ENCODE measurements at regions of chr4 and their contacts with region 1.

Region 1: DNA sequence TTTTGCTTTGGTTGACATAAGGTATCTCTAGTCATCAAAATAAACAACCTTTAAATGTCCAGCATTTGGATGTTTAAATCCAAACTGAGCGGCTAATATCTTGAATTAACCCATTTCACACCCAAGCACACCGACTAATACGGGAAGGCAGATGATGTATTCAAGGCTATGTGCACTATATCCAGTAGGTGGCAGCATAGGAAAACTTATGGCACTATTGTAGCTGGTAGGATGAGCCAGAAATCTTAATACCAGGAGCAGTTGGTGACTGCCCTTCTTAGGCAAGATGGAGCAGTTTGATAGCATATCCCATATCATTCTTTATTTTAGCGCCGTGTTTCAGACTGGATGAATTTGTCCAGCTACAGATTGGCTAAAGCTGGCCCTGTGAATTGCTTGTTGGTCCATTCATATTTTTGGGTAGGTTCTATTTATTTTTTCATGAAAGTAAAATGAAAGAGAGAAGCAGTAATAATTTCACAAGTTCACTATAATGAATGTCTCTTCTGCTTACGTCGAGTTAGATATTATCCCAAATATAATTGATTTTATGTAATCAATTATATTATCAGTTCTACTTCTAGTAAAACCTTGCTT is 24.4 kb downstream of the UCHL1 start:
- DNase-seq: peak; percentile 87
- H3K4me3 ChIP-seq: no peak overlapping the region
- H3K27ac ChIP-seq: no peak overlapping the region
- H3K4me1 ChIP-seq: no peaks in the 10 kb centered on the region
- H3K27me3 ChIP-seq: peaks cover 0 to 1% of the 10 kb centered on the region in 2 experiments
- CTCF ChIP-seq: peak; percentile 53 to 77
- POLR2A ChIP-seq: no peak

Region 2: GRCh38 chr4:41360214-41360920 is 79.2 kb after region 1 on chr4:
- CTCF ChIA-PET with region 1: interaction called, 11 read pairs
- POLR2A ChIA-PET with region 1: no interaction called
- dilution Hi-C with region 1: no loop called
- intact Hi-C with region 1: loop called (anchors 2 kb)
- DNase-seq: peak; percentile 70
- H3K4me3 ChIP-seq: peak overlapping the region; percentile 28 to 76 (median 40)
- H3K27ac ChIP-seq: no peak overlapping the region
- H3K4me1 ChIP-seq: peaks cover 3% of the 10 kb centered on the region
- H3K27me3 ChIP-seq: peaks cover 7 to 52% of the 10 kb centered on the region in 2 experiments
- CTCF ChIP-seq: no peak
- POLR2A ChIP-seq: no peak

Region 3: DNA sequence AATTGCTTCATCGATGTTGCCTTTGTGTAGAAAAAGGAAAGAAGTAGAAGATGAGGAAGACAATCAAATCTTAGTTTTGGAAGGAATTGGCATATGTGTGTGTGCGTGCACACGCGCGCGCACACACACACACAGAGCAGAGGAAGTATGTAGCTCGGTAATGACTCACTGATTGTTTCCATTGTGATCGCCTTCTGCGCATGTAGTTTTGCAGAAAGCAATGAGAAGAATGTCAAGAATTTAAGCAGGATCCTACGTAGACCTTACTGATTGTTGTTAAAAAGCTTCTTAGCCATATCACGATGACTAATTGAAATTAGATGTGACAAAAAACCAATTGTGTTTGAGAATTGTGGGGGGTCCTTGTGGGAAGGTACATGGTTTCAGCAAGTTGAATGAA is 244.0 kb after region 1 on chr4:
- CTCF ChIA-PET with region 1: no interaction called
- POLR2A ChIA-PET with region 1: no interaction called
- dilution Hi-C with region 1: no loop called
- intact Hi-C with region 1: no loop called
- DNase-seq: peak; percentile 96
- H3K4me3 ChIP-seq: no peak overlapping the region
- H3K27ac ChIP-seq: peak overlapping the region; percentile 98
- H3K4me1 ChIP-seq: peaks cover 21% of the 10 kb centered on the region
- H3K27me3 ChIP-seq: no peaks in the 10 kb centered on the region
- CTCF ChIP-seq: no peak
- POLR2A ChIP-seq: no peak

Region 4: DNA sequence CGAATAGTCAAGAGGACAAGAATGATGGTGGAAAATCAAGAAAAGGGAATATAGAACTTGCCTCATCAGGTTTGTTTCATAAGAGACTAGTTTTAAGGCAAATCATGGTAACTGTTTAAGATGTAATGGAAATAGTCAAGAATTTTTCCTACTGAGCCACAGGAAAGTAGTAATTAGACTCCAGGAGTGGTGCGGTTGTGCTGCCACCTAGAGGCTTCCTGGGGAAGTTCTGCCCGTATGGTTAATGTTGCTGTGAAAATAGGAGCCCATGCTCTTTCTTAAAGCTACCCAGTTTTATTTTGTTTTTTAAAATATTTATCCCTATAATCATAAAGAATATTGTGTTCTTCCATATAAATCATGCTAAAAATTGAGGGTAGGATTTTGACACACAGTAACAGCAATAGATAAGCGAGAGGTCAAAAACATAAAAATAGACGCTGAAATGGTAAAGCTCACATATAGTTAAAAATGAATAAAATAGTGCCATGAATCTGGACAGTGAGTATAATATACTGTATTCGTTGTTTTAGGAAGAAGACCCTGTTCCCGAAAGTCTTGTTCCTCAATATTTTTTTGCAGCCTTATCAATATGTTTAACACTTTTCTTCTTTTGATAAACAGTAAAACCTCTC is 380.4 kb after region 1 on chr4:
- CTCF ChIA-PET with region 1: interaction called, 256 read pairs
- POLR2A ChIA-PET with region 1: no interaction called
- dilution Hi-C with region 1: no loop called
- intact Hi-C with region 1: loop called (anchors 1 kb)
- DNase-seq: peak; percentile 69
- H3K4me3 ChIP-seq: no peak overlapping the region
- H3K27ac ChIP-seq: no peak overlapping the region
- H3K4me1 ChIP-seq: no peaks in the 10 kb centered on the region
- H3K27me3 ChIP-seq: peaks cover 2 to 12% of the 10 kb centered on the region in 2 experiments
- CTCF ChIP-seq: peak; percentile 82 to 87
- POLR2A ChIP-seq: no peak

Region 5: GRCh38 chr4:41882625-41883347 is 601.6 kb after region 1 on chr4:
- CTCF ChIA-PET with region 1: interaction called, 25 read pairs
- POLR2A ChIA-PET with region 1: no interaction called
- dilution Hi-C with region 1: no loop called
- intact Hi-C with region 1: loop called (anchors 1 kb)
- DNase-seq: peak; percentile 35
- H3K4me3 ChIP-seq: no peak overlapping the region
- H3K27ac ChIP-seq: no peak overlapping the region
- H3K4me1 ChIP-seq: peaks cover 6% of the 10 kb centered on the region
- H3K27me3 ChIP-seq: peaks cover 51 to 90% of the 10 kb centered on the region in 2 experiments
- CTCF ChIP-seq: peak; percentile 89 to 90
- POLR2A ChIP-seq: no peak